WTC11 (cell line): ENCODE measurements at regions of chr6 and their contacts with region 1.

Region 1: GRCh38 chr6:24274441-24275083 is 83.3 kb downstream of the DCDC2 start:
- DNase-seq: no peak
- ATAC-seq: peak; percentile 30
- H3K4me3 Mint-ChIP-seq: no peak overlapping the region
- H3K27ac Mint-ChIP-seq: no peak overlapping the region
- H3K4me1 Mint-ChIP-seq: peaks cover 25% of the 10 kb centered on the region
- H3K27me3 Mint-ChIP-seq: no peaks in the 10 kb centered on the region
- CTCF ChIP-seq: 0 out of 2 replicates have a peak, but pooled peaks have one; percentile 32

Region 2: GRCh38 chr6:24064082-24064481 is 210.5 kb before region 1 on chr6:
- CTCF ChIA-PET with region 1: interaction called, 13 read pairs
- POLR2A ChIA-PET with region 1: no interaction called
- DNase-seq: peak; percentile 20
- ATAC-seq: peak; percentile 58
- H3K4me3 Mint-ChIP-seq: no peak overlapping the region
- H3K27ac Mint-ChIP-seq: no peak overlapping the region
- H3K4me1 Mint-ChIP-seq: no peaks in the 10 kb centered on the region
- H3K27me3 Mint-ChIP-seq: no peaks in the 10 kb centered on the region
- CTCF ChIP-seq: peak; percentile 43

Region 3: GRCh38 chr6:24205020-24205492 is 69.5 kb before region 1 on chr6:
- CTCF ChIA-PET with region 1: interaction called, 12 read pairs
- POLR2A ChIA-PET with region 1: no interaction called
- DNase-seq: no peak
- ATAC-seq: peak; percentile 67
- H3K4me3 Mint-ChIP-seq: no peak overlapping the region
- H3K27ac Mint-ChIP-seq: no peak overlapping the region
- H3K4me1 Mint-ChIP-seq: no peaks in the 10 kb centered on the region
- H3K27me3 Mint-ChIP-seq: no peaks in the 10 kb centered on the region; the same call in 1 of the 2 replicates
- CTCF ChIP-seq: peak; percentile 47

Region 4: DNA sequence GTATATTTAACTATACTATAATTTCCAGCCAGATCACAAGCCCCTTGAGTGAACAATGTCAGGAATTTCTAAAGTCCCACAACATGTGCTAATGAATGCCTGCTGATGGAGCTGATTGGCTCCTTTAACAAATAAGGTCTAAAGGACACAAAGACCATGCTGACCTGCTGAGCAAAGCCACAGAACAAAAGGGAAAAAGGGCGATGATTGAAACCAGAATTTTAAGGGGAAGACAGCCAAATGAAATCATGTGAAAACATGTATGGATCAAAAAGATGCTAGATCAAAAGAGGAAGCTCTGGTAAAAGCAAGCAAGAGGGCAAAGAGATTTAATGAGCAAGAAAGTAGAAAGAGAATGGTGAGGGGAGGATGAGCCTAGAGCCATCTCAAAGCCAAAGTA is 22.3 kb before region 1 on chr6:
- CTCF ChIA-PET with region 1: interaction called, 60 read pairs
- POLR2A ChIA-PET with region 1: no interaction called
- DNase-seq: no peak
- ATAC-seq: peak; percentile 77
- H3K4me3 Mint-ChIP-seq: no peak overlapping the region
- H3K27ac Mint-ChIP-seq: peak overlapping the region; percentile 95
- H3K4me1 Mint-ChIP-seq: peaks cover 37% of the 10 kb centered on the region
- H3K27me3 Mint-ChIP-seq: no peaks in the 10 kb centered on the region
- CTCF ChIP-seq: no peak

Region 5: DNA sequence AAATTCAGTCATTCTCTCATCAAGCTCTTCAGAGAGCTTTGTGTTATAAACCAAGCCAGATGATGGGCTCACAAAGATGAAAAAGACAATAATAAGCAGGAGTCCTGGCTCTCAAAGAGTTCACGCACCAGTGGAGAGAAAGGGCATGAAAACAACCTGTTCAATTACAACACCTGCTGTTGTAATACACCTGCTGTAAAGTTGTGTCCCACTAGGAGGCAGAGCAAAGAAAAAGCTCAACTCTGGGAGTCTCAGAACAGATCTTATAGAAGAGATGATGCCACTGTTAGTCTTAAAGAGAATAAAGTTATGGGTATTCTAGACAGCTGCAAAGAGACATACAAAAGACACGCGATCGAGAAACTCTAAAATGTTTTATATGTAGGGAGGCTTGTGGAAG is 17.3 kb before region 1 on chr6:
- CTCF ChIA-PET with region 1: interaction called, 60 read pairs
- POLR2A ChIA-PET with region 1: no interaction called
- DNase-seq: no peak
- ATAC-seq: peak; percentile 90
- H3K4me3 Mint-ChIP-seq: no peak overlapping the region
- H3K27ac Mint-ChIP-seq: peak overlapping the region; percentile 50; the same call in 1 of the 2 replicates
- H3K4me1 Mint-ChIP-seq: peaks cover 18% of the 10 kb centered on the region
- H3K27me3 Mint-ChIP-seq: peaks cover 2% of the 10 kb centered on the region; the same call in 1 of the 2 replicates
- CTCF ChIP-seq: no peak; the same call in 1 of the 2 replicates